ENCODE measurements at regions of chr16 and their contacts with region 1.

Region 1: DNA sequence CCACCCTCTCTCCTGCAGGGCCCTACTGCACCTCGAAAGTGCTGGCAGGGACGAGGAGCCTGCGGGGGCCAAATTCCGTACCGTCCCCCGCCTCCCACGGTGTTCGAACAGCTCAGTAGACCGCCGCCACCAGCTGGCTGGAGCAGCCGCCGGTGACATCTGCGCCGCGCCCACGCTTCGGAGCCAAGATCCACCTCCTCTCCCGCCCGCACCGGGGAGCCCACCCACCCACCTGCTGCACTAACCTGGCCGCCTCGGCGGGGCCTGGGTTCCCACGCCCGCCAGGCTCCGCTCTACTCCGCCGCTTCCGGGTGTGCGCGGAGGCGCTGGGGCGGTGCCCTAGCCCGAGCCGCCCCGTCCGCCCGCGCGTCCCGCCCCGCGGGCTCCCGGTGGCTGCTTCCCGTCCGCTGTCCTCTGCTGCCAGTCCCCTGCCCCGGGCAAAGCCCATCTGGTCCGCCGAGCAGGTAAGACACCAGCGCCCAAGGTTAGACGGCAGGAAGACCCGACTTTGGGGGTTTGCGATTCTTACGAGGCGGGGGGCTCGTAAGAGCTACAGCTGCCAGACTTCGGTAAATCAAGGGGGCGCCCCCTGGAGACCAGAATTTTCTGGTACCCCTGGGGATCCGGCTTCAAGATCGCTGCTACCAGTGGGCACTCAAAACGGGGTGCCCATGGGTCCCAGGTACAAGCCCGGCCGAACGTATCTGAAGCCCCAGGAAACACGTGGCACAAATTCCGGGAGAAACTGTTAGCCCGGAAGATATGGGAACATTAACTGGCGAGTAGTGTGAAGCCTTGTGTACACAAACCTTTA is at the starts of genes FBXL8 and TRADD:
- DNase-seq: peak; percentile 85
- H3K4me3 Mint-ChIP-seq: peak within 1 kb of the TSS; percentile 94
- H3K27ac Mint-ChIP-seq: peak within 1 kb of the TSS; percentile 100
- H3K4me1 Mint-ChIP-seq: peaks cover 61% of the 10 kb centered on the region
- H3K27me3 Mint-ChIP-seq: peaks cover 44% of the 10 kb centered on the region

Region 2: DNA sequence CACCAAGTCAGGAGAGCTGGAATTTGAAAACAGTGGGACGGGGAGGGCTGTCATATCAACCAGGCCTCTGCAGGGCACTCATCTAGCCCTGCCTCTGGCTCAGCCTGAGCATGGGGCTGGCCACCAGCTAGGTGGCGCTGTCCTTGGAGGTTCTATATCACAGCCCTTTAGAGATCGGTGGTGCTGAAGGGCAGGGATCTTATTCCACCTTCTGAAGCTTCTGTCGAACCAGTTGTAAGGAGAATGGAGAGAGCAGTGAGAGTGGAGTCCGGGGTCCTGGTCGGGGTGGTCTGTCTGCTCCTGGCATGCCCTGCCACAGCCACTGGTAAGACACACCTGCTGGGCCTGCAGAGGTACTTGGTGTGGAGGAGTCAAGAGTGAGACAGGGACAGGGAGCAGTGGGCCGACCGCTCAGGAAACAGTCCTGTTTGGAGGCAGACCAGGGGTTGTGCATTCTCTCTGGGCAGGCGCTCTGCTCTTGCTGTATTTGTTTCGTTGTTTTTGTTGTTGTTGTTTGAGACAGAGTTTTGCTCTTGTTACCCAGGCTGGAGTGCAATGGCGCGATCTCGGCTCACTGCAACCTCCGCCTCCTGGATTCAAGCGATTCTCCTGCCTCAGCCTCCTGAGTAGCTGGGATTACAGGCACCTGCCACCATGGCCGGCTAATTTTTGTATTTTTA is 198.6 kb before region 1 on chr16 and contains the start of gene CES3:
- CTCF ChIA-PET with region 1: interaction called, 12 read pairs
- DNase-seq: peak; percentile 83
- H3K4me3 Mint-ChIP-seq: peak within 1 kb of the TSS; percentile 52
- H3K27ac Mint-ChIP-seq: peak within 1 kb of the TSS; percentile 86
- H3K4me1 Mint-ChIP-seq: peaks cover 42% of the 10 kb centered on the region
- H3K27me3 Mint-ChIP-seq: peaks cover 47% of the 10 kb centered on the region

Region 3: GRCh38 chr16:66984892-66985311 is 174.9 kb before region 1 on chr16:
- CTCF ChIA-PET with region 1: interaction called, 25 read pairs
- DNase-seq: peak; percentile 74
- H3K4me3 Mint-ChIP-seq: no peak overlapping the region
- H3K27ac Mint-ChIP-seq: peak overlapping the region; percentile 95
- H3K4me1 Mint-ChIP-seq: peaks cover 82% of the 10 kb centered on the region
- H3K27me3 Mint-ChIP-seq: no peaks in the 10 kb centered on the region

Region 4: DNA sequence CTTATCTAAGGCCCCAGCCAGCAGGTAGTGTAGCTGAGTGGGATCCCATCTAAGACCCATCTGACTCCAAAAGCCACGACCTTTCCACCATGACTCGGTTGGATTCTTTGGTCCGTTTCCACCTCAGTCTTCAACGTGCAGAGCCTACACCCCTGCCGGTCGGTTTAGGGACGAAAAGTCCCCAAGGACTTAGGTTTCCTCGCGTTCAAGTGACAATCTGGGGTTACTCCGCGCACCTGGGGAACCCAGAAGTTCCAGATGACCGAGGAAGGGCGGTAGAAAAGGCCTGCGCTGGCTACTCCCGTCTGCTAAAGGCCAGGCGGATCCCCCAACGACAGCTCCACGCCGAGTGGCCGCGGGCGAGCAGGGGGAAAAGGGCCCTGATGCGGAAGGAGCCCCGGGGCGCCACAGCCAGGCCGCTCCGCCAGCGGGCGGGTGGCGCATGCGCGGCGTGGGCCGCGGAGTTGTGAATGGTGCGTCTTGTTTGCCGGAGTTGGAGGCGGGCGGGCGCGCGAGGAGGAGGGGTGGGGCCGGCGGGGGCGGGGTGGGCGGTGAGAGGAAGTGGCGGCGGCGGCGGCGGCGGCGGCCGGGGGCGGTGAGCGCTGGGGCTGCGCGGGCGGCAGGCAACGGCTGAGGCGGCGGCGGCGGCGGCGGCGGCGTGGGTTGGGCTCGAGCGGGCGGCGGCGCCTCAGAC is 131.1 kb before region 1 on chr16 and contains the start of gene CBFB:
- CTCF ChIA-PET with region 1: interaction called, 16 read pairs
- DNase-seq: peak; percentile 94
- H3K4me3 Mint-ChIP-seq: peak within 1 kb of the TSS; percentile 91
- H3K27ac Mint-ChIP-seq: peak within 1 kb of the TSS; percentile 92
- H3K4me1 Mint-ChIP-seq: peaks cover 70% of the 10 kb centered on the region
- H3K27me3 Mint-ChIP-seq: no peaks in the 10 kb centered on the region

Region 5: GRCh38 chr16:67173808-67174705 is 14.3 kb after region 1 on chr16:
- CTCF ChIA-PET with region 1: interaction called, 19 read pairs
- DNase-seq: peak; percentile 86
- H3K4me3 Mint-ChIP-seq: peak overlapping the region; percentile 74
- H3K27ac Mint-ChIP-seq: no peak overlapping the region
- H3K4me1 Mint-ChIP-seq: peaks cover 67% of the 10 kb centered on the region
- H3K27me3 Mint-ChIP-seq: peaks cover 100% of the 10 kb centered on the region

Measured in activated naive CD4-positive, alpha-beta T cell treated with anti-CD3 and anti-CD28 coated beads, Interleukin-2, amount 10 ng/mL, durations not matched to agents 7 days and 5 days (primary cell).